Posterior vena cava (tissue), 2 donors: ENCODE measurements at regions of chr5 and their contacts with region 1.

Region 1: GRCh38 chr5:132446669-132447068 is 43.9 kb downstream of the IRF1 start:
- DNase-seq: peak; percentile 90

Region 2: DNA sequence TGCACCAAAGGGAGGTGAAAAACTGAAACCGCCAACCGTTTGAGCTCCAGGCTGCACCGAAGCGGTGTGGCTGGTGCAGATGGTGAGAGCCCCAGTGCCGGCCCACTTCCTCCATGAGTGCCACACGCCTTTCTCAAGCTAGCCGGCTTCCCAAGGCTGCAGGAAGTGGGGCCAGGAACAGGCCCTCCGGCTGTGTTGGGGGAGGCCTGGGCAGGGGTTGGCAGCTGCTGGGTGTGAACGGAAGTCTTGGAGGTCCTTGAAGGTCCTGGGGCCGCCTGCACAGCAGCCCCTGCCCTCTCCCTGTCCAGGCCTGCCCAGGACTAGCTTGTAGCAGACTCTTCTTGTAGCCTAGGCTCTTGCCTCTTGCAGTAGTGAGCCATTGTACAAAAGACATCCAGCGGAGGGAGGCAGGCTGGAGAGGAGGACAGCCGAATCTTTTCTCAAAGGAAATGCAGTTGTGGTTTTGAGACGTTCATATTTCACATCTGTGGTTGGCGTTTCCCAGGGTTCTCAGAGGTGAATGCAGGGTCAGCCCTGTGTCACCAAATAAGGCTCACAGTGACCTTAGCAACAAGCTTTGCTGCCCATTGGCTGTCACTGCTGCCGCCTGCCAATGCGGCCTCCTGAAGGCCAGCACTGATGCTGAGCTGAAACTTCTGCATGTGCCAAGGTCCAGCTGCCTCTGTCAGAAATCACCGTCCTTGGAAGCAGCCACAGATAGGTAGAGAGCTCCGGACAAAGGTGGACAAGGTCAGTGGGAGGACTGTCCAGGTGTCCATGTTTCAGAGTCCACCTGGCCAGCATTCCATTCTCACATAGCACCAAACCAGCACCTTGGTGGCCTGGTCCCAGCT is 20.0 kb after region 1 on chr5:
- intact Hi-C with region 1: no loop called
- DNase-seq: peak; percentile 84

Region 3: DNA sequence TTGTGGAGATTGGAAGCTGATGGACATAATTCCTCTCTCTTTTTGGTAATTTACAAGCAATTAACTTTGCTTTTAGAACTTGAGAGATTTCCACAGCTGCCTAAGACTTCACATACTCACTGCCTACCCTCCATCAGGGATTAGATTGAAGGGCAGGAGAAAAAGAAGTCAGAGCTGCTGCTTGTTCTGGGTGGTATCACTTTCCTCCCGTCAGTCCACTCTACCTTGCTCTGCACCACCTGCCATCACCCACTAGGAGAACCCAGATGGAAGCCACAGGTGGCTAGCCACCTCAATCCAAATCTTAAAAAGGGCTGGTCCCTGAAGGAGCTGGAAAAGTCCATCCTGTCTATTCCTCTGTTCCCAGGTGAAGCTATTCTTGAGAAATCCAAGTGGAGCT is 33.4 kb after region 1 on chr5:
- intact Hi-C with region 1: loop called in 1 of 2 experiments (anchors 5 kb)
- DNase-seq: no peak